AG04450 (cell line): ENCODE measurements at regions of chr11 and their contacts with region 1.

Region 1: GRCh38 chr11:69145062-69145405 is 10.7 kb upstream of the SMIM38 start:
- DNase-seq: peak; percentile 56
- H3K4me3 ChIP-seq: no peak overlapping the region
- H3K27ac ChIP-seq: peak overlapping the region; percentile 25
- H3K27me3 ChIP-seq: no peaks in the 10 kb centered on the region
- CTCF ChIP-seq: peak; percentile 3; the same call in 1 of the 2 replicates

Region 2: DNA sequence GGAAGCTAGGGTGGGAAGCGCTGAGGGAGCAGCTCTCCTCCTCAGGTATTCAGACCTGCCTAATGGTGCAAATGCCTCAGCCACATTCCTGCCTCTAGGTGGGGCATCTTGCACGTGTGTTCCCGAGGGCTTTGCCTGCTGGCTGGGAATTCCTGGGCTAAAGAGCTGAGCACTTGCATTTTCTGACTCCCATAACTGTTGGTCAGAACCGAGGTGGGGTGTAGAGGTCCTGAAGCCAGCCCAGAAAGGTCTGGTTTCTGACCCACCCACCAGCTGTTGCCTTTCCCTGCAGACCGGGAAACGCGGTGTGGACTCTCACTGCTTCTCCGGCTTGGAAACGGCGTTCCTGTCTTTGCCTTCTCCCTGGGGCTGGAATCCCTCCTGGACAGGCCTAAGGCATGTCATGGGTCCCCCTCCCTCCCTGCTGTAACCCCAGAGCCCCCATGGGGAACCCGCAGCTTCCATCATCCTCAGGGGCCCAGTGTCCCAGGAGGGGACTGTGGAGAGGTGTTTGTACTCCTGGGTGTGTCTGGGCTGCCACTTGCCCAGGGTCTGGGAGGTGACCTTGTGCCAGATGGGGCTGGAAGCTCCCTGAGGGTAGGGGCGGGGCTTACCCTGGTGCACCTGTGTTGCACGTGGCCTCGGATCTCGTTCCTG is 13.3 kb before region 1 on chr11:
- CTCF ChIA-PET with region 1: interaction called, 23 read pairs
- POLR2A ChIA-PET with region 1: no interaction called
- DNase-seq: peak; percentile 45
- H3K4me3 ChIP-seq: no peak overlapping the region
- H3K27ac ChIP-seq: no peak overlapping the region
- H3K27me3 ChIP-seq: no peaks in the 10 kb centered on the region
- CTCF ChIP-seq: peak; percentile 83

Region 3: GRCh38 chr11:69257838-69258658 is 113.0 kb after region 1 on chr11:
- CTCF ChIA-PET with region 1: no interaction called
- POLR2A ChIA-PET with region 1: no interaction called
- DNase-seq: no peak
- H3K4me3 ChIP-seq: no peak overlapping the region
- H3K27ac ChIP-seq: no peak overlapping the region
- H3K27me3 ChIP-seq: peaks cover 22% of the 10 kb centered on the region
- CTCF ChIP-seq: no peak